ENCODE measurements at regions of chr12 and their contacts with region 1.

Region 1: DNA sequence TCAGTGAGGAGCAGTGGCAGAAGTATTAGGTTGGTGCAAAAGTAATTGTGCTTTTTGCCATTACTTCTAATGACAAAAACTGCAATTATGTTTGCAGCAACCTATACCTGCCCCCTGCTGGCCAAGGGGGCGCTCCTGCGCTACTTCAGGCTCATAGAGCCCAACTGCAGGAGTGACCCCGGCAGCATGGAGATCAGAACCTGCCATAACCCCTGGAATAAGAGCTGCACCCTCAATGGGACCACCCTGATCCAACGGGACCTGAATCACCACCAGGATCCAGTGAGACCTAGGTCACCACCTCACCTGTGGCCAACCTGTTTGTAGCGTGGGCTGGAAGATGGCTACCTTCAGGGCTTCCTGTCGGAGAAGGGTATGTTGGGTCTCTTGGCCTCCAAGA is 8.2 kb upstream of the C12orf42 start:
- DNase-seq: peak; percentile 60
- H3K4me3 Mint-ChIP-seq: no peak overlapping the region
- H3K27ac Mint-ChIP-seq: no peak overlapping the region
- H3K4me1 Mint-ChIP-seq: peaks cover 28% of the 10 kb centered on the region
- H3K27me3 Mint-ChIP-seq: peaks cover 5% of the 10 kb centered on the region

Region 2: GRCh38 chr12:102879144-102879763 is 624.7 kb before region 1 on chr12:
- CTCF ChIA-PET with region 1: interaction called, 3 read pairs
- POLR2A ChIA-PET with region 1: no interaction called
- intact Hi-C with region 1: loop called (anchors 1 kb)
- DNase-seq: peak; percentile 47
- H3K4me3 Mint-ChIP-seq: no peak overlapping the region
- H3K27ac Mint-ChIP-seq: no peak overlapping the region
- H3K4me1 Mint-ChIP-seq: no peaks in the 10 kb centered on the region
- H3K27me3 Mint-ChIP-seq: peaks cover 11% of the 10 kb centered on the region

Region 3: DNA sequence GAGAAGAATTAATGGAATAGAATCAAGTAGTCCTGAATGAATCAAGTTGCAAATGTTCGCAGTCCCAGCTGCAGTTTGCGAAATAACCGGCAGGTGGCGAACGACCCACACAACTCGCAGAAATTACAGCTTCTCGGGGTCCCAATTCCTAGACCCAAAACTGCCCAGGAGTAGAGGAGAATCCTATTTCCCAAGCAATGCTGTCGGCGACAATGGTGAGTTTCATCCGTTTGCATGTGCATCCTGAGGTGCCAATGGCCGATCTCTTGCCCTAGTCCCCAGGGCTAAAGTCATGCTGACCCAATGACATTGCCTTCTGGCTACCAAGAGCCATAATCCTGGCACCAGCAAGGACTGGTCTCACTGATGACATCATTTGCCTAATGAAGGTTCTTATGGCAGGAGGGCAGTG is 555.0 kb before region 1 on chr12:
- CTCF ChIA-PET with region 1: interaction called, 3 read pairs
- POLR2A ChIA-PET with region 1: no interaction called
- intact Hi-C with region 1: loop called (anchors 2 kb)
- DNase-seq: peak; percentile 60
- H3K4me3 Mint-ChIP-seq: no peak overlapping the region
- H3K27ac Mint-ChIP-seq: no peak overlapping the region
- H3K4me1 Mint-ChIP-seq: peaks cover 9% of the 10 kb centered on the region
- H3K27me3 Mint-ChIP-seq: peaks cover 44% of the 10 kb centered on the region

Region 4: GRCh38 chr12:103279444-103279843 is 224.5 kb before region 1 on chr12:
- CTCF ChIA-PET with region 1: no interaction called
- POLR2A ChIA-PET with region 1: no interaction called
- intact Hi-C with region 1: loop called (anchors 1 kb)
- DNase-seq: no peak
- H3K4me3 Mint-ChIP-seq: no peak overlapping the region
- H3K27ac Mint-ChIP-seq: no peak overlapping the region
- H3K4me1 Mint-ChIP-seq: peaks cover 7% of the 10 kb centered on the region
- H3K27me3 Mint-ChIP-seq: no peaks in the 10 kb centered on the region

Region 5: GRCh38 chr12:103441437-103442181 is 62.4 kb before region 1 on chr12:
- CTCF ChIA-PET with region 1: no interaction called
- POLR2A ChIA-PET with region 1: no interaction called
- intact Hi-C with region 1: loop called (anchors 1 kb)
- DNase-seq: peak; percentile 50
- H3K4me3 Mint-ChIP-seq: peak overlapping the region; percentile 51
- H3K27ac Mint-ChIP-seq: peak overlapping the region; percentile 83
- H3K4me1 Mint-ChIP-seq: peaks cover 21% of the 10 kb centered on the region
- H3K27me3 Mint-ChIP-seq: no peaks in the 10 kb centered on the region

Region 6: DNA sequence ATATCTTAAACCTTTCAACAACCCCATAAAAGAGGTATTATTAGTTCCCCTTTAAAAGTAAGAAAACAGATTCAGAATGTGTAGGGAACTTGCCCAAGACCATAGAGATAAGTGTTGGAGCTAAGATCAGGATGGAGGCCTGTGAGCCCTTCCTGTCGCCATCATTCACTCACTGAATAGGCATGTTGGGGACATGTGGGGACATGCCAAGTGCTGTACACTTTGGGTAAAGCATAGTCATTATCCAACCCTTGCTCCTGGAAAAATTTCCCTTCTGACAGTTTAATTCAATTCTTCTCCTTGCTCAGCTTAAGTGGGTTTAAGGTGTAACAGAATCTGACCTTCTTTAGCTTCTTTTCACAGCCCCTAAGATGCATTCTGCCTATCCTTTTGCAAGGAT is 19.8 kb after region 1 on chr12:
- CTCF ChIA-PET with region 1: no interaction called
- POLR2A ChIA-PET with region 1: no interaction called
- intact Hi-C with region 1: no loop called
- DNase-seq: no peak
- H3K4me3 Mint-ChIP-seq: no peak overlapping the region
- H3K27ac Mint-ChIP-seq: no peak overlapping the region
- H3K4me1 Mint-ChIP-seq: no peaks in the 10 kb centered on the region
- H3K27me3 Mint-ChIP-seq: peaks cover 3% of the 10 kb centered on the region

Region 7: DNA sequence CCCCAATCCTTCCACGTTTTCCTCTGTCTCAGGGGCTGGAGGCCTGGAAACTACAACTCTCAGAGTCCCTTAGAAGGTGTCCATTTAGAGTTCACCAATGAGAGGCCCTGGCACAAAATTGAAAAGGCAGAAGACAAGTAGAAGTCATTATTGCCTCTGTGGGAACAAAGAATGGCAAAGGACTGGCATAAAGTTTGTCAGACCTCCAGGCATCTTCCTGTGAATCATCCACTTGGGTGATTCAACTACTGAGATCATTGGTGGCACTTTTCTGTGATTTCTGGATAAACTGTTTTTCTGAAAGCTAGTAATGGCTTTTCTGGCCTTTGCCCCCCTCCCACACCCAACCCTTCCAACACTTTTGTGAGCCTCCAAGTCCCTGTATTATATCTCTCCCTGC is 34.4 kb after region 1 on chr12:
- CTCF ChIA-PET with region 1: no interaction called
- POLR2A ChIA-PET with region 1: no interaction called
- intact Hi-C with region 1: loop called (anchors 1 kb)
- DNase-seq: peak; percentile 14
- H3K4me3 Mint-ChIP-seq: no peak overlapping the region
- H3K27ac Mint-ChIP-seq: no peak overlapping the region
- H3K4me1 Mint-ChIP-seq: peaks cover 11% of the 10 kb centered on the region
- H3K27me3 Mint-ChIP-seq: peaks cover 3% of the 10 kb centered on the region

Region 8: GRCh38 chr12:104288635-104289274 is 784.8 kb after region 1 on chr12:
- CTCF ChIA-PET with region 1: no interaction called
- POLR2A ChIA-PET with region 1: no interaction called
- intact Hi-C with region 1: no loop called
- DNase-seq: peak; percentile 92
- H3K4me3 Mint-ChIP-seq: peak overlapping the region; percentile 98
- H3K27ac Mint-ChIP-seq: peak overlapping the region; percentile 99
- H3K4me1 Mint-ChIP-seq: peaks cover 19% of the 10 kb centered on the region
- H3K27me3 Mint-ChIP-seq: no peaks in the 10 kb centered on the region